ENCODE measurements at regions of chr7 and their contacts with region 1.

Region 1: DNA sequence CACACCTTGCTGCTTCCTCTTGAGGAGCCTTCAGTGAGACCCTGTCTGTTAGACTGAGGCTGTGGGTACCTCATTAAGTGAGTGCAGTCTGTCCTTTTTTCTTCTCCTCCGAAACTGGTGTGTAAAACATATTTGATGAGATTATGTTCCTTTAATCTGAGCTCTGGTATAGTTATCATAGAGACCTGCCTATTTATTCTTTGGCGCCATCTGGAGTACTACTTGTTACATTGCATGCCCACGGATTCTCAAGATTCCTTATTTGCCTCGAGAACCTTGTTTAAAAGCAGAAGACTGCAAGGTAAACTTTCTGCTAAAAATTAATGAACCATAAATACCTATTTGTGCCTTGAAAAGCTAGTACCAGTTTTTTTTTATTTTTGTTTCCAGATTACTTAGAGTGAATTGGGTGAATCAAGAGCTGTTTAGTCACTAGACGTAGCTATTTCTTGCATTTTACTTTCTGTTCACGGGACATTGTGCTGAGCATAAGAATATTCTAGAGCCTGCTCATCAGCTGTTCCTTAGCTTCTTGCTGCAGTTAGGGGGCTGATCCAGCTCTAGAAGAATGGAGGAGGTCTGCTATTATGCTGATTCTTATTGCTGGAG is 16.9 kb upstream of the STMP1 start:
- DNase-seq: peak; percentile 32 to 55
- ATAC-seq: peak; percentile 84 to 89; a peak in 5 of 6 replicates
- H3K4me3 ChIP-seq: no peak overlapping the region
- H3K27ac ChIP-seq: no peak overlapping the region
- H3K4me1 ChIP-seq: no peaks in the 10 kb centered on the region
- CTCF ChIP-seq: peak; percentile 83
- EP300 ChIP-seq: no peak
- POLR2A ChIP-seq: no peak
- RAD21 ChIP-seq: peak; percentile 40 to 61; a peak in 4 of 5 replicates

Region 2: GRCh38 chr7:135335628-135336139 is 309.7 kb before region 1 on chr7:
- CTCF ChIA-PET with region 1: interaction called, 13 read pairs
- POLR2A ChIA-PET with region 1: no interaction called
- DNase-seq: peak; percentile 69 to 81
- ATAC-seq: peak; percentile 92 to 97
- H3K4me3 ChIP-seq: no peak overlapping the region
- H3K27ac ChIP-seq: peak overlapping the region; percentile 28 to 43; a peak in 2 of 6 replicates
- H3K4me1 ChIP-seq: peaks cover 8% of the 10 kb centered on the region; the same call in 1 of the 3 replicates
- CTCF ChIP-seq: peak; percentile 69
- EP300 ChIP-seq: no peak
- POLR2A ChIP-seq: no peak
- RAD21 ChIP-seq: peak; percentile 93 to 94

Region 3: DNA sequence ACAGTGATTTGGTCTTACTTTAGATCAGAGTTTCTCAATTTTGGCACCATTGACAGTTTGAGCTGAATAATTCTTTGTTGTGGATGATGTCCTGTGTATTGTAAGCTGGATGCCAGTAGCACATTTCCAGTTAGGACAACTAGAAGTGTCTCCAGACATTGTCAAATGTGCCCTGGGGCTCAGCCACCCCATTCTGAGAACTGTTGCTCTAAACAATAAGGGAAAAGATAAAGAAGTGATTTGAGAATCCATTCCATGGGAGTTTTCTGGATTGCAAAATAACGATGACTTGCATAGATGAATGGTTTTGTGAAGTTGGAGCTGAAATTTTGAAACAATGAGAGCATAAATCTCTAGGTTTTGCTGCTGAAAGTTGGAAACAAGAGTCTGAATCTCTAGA is 43.1 kb before region 1 on chr7:
- CTCF ChIA-PET with region 1: interaction called, 12 read pairs
- POLR2A ChIA-PET with region 1: no interaction called
- DNase-seq: no peak
- ATAC-seq: no peak
- H3K4me3 ChIP-seq: no peak overlapping the region
- H3K27ac ChIP-seq: no peak overlapping the region
- H3K4me1 ChIP-seq: no peaks in the 10 kb centered on the region
- CTCF ChIP-seq: no peak
- EP300 ChIP-seq: no peak
- POLR2A ChIP-seq: no peak
- RAD21 ChIP-seq: no peak

Region 4: GRCh38 chr7:135616136-135616535 is 29.3 kb before region 1 on chr7:
- CTCF ChIA-PET with region 1: interaction called, 113 read pairs
- POLR2A ChIA-PET with region 1: no interaction called
- DNase-seq: no peak
- ATAC-seq: no peak
- H3K4me3 ChIP-seq: no peak overlapping the region
- H3K27ac ChIP-seq: no peak overlapping the region
- H3K4me1 ChIP-seq: no peaks in the 10 kb centered on the region
- CTCF ChIP-seq: no peak
- EP300 ChIP-seq: no peak
- POLR2A ChIP-seq: no peak
- RAD21 ChIP-seq: no peak

Region 5: GRCh38 chr7:135620980-135621850 is 24.2 kb before region 1 on chr7:
- CTCF ChIA-PET with region 1: interaction called, 113 read pairs
- POLR2A ChIA-PET with region 1: no interaction called
- DNase-seq: peak; percentile 40 to 75
- ATAC-seq: peak; percentile 70 to 80; a peak in 5 of 6 replicates
- H3K4me3 ChIP-seq: no peak overlapping the region
- H3K27ac ChIP-seq: no peak overlapping the region
- H3K4me1 ChIP-seq: no peaks in the 10 kb centered on the region
- CTCF ChIP-seq: peak; percentile 82
- EP300 ChIP-seq: no peak
- POLR2A ChIP-seq: no peak
- RAD21 ChIP-seq: peak; percentile 32 to 37; a peak in 3 of 5 replicates

Region 6: GRCh38 chr7:135662373-135663114 is 17.1 kb after region 1 on chr7 and contains the start of gene STMP1:
- CTCF ChIA-PET with region 1: interaction called, 38 read pairs
- POLR2A ChIA-PET with region 1: interaction called, 9 read pairs
- DNase-seq: peak; percentile 88 to 97
- ATAC-seq: peak; percentile 94 to 95
- H3K4me3 ChIP-seq: peak within 1 kb of the TSS; percentile 85
- H3K27ac ChIP-seq: peak within 1 kb of the TSS; percentile 91 to 93
- H3K4me1 ChIP-seq: peaks cover 17% of the 10 kb centered on the region; the same call in 2 of the 3 replicates
- CTCF ChIP-seq: no peak; the same call in 2 of the 3 replicates
- EP300 ChIP-seq: no peak
- POLR2A ChIP-seq: peak; percentile 96
- RAD21 ChIP-seq: peak; percentile 25 to 50; a peak in 3 of 5 replicates
- polyA plus RNA-seq, gene STMP1: 30.1 and 35.5 TPM in 2 replicates

Region 7: DNA sequence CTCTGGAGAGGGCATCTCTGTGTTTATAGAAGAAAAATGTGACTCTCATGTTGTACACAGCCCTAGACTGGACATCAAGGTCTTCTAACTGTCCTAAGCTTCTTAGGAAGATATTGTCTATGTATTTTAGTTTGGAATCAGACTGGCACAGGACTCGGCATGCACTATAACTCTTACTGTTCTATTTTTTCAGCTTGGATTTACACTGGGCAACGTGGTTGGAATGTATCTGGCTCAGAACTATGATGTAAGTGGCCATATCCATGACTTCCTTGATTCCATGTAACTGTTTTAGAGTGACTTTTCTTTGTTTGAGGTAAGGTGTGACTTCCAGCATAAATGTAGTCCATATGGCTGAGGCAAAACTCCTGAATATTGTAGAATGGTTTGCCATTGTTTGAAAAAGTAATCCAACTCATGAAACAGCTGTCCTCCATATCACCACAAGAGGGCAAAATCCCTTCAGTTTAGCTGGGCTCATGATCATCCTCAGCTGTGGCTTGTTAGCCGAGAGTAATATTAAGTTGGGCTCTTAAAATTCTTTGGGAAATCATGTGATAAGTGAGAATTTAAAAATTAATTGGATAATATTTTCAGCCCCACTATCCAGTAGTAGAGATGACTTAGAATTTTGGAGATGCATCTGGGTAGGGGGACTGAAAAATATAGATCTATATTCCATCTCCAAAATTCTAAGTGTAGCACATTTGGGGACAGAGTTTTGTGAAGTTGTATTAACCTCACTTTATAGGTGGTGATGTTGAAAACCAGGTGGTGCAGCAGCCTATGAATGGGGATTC is 27.4 kb after region 1 on chr7:
- CTCF ChIA-PET with region 1: interaction called, 19 read pairs
- POLR2A ChIA-PET with region 1: no interaction called
- DNase-seq: peak; percentile 61 to 68
- ATAC-seq: peak; percentile 85 to 96
- H3K4me3 ChIP-seq: no peak overlapping the region
- H3K27ac ChIP-seq: no peak overlapping the region
- H3K4me1 ChIP-seq: peaks cover 3% of the 10 kb centered on the region; the same call in 2 of the 3 replicates
- CTCF ChIP-seq: peak; percentile 74
- EP300 ChIP-seq: no peak
- POLR2A ChIP-seq: no peak
- RAD21 ChIP-seq: peak; percentile 63 to 69

Region 8: GRCh38 chr7:135862586-135863340 is 217.4 kb after region 1 on chr7:
- CTCF ChIA-PET with region 1: no interaction called
- POLR2A ChIA-PET with region 1: no interaction called
- DNase-seq: no peak
- ATAC-seq: no peak; a peak in 1 of 6 replicates
- H3K4me3 ChIP-seq: no peak overlapping the region
- H3K27ac ChIP-seq: no peak overlapping the region
- H3K4me1 ChIP-seq: no peaks in the 10 kb centered on the region
- CTCF ChIP-seq: no peak
- EP300 ChIP-seq: no peak
- POLR2A ChIP-seq: no peak
- RAD21 ChIP-seq: no peak

Measured in A549 (cell line).